K562 (cell line): ENCODE measurements at regions of chr2 and their contacts with region 1.

Region 1: DNA sequence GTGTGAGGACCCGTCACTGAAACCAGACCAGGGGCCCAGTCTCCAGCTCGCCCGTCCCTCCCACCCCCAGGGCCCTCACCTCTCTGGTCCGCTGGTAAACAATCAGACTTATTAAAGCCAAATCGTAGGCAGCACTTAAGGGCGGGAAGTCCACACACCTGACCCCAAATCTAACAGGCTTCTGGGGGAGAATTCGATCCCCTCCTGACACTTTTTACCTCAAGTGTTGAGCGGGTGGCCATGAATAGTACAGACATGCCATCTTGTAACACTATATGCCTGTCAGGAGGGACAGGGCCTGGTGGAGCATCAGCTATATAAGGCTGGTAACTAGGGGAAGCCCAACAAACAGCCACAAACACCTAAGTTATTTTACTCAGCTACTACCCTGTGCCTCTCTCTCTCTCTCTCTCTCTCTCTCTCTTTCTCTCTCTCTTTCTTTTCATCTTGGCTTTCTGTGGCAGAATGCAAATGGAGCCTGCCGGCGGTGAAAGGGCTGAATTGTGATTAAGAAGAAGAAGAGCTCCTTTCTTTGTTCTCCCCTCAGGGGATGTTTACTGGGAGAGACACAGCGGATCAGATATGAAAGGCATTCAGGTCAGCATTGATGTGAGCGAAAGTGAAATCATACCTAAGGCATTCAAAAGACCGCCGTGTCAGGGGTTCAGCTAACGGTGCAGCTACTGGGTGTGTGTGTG is 9.5 kb downstream of the ZEB2 start:
- DNase-seq: peak in 1 of 4 experiments; percentile 56
- ATAC-seq: peak; percentile 44
- H3K4me3 ChIP-seq: peak overlapping the region; percentile 8; the same call in 1 of the 2 replicates
- H3K27ac ChIP-seq: peak overlapping the region; percentile 60
- H3K4me1 ChIP-seq: peaks cover 31 to 85% of the 10 kb centered on the region in 2 experiments
- H3K27me3 ChIP-seq: no peaks in the 10 kb centered on the region
- CTCF ChIP-seq: no peak
- EP300 ChIP-seq: no peak
- POLR2A ChIP-seq: peak; percentile 66
- RAD21 ChIP-seq: 0 out of 4 replicates have a peak, but pooled peaks of 1 of the 2 experiments have one; percentile 0

Region 2: GRCh38 chr2:144456680-144457079 is 53.8 kb before region 1 on chr2:
- CTCF ChIA-PET with region 1: no interaction called
- POLR2A ChIA-PET with region 1: no interaction called
- in situ Hi-C with region 1: no loop called
- intact Hi-C with region 1: no loop called
- DNase-seq: peak in 2 of 4 experiments; percentile 46 to 62
- ATAC-seq: peak; percentile 69
- H3K4me3 ChIP-seq: no peak overlapping the region
- H3K27ac ChIP-seq: no peak overlapping the region
- H3K4me1 ChIP-seq: peaks cover 5 to 84% of the 10 kb centered on the region in 2 experiments; a peak in 4 of 5 replicates
- H3K27me3 ChIP-seq: no peaks in the 10 kb centered on the region
- CTCF ChIP-seq: no peak
- EP300 ChIP-seq: no peak
- POLR2A ChIP-seq: no peak
- RAD21 ChIP-seq: no peak

Region 3: GRCh38 chr2:144493027-144493809 is 17.2 kb before region 1 on chr2:
- CTCF ChIA-PET with region 1: no interaction called
- POLR2A ChIA-PET with region 1: interaction called, 27 read pairs
- in situ Hi-C with region 1: no loop called
- intact Hi-C with region 1: no loop called
- DNase-seq: no peak
- ATAC-seq: no peak
- H3K4me3 ChIP-seq: no peak overlapping the region
- H3K27ac ChIP-seq: no peak overlapping the region
- H3K4me1 ChIP-seq: peaks cover 10 to 28% of the 10 kb centered on the region in 2 experiments; a peak in 4 of 5 replicates
- H3K27me3 ChIP-seq: no peaks in the 10 kb centered on the region
- CTCF ChIP-seq: no peak
- EP300 ChIP-seq: no peak
- POLR2A ChIP-seq: no peak
- RAD21 ChIP-seq: no peak

Region 4: DNA sequence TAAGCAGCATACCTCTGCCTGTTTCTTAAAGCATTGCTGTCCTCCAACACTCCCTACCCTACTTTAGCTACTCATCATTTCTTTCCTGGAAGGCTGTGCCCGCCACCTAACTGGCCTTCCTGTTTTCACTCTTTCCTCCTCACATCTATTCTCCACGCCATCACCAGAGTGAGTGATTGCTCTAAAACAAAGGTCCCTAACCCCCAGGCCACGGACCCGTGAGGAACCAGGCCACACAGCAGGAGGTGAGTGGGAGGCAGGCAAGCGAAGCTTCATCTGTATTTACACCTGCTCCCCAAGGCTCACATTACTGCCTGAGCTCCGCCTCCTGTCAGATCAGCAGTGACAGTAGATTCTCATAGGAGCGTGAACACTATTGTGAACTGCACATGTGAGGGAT is 22.8 kb after region 1 on chr2:
- CTCF ChIA-PET with region 1: no interaction called
- POLR2A ChIA-PET with region 1: no interaction called
- in situ Hi-C with region 1: no loop called
- intact Hi-C with region 1: no loop called
- DNase-seq: peak in 1 of 4 experiments; percentile 45
- ATAC-seq: peak; percentile 24; the same call in 2 of the 3 replicates
- H3K4me3 ChIP-seq: no peak overlapping the region
- H3K27ac ChIP-seq: no peak overlapping the region
- H3K4me1 ChIP-seq: peaks cover 0 to 3% of the 10 kb centered on the region in 2 experiments; a peak in 2 of 5 replicates
- H3K27me3 ChIP-seq: no peaks in the 10 kb centered on the region
- CTCF ChIP-seq: no peak
- EP300 ChIP-seq: no peak
- POLR2A ChIP-seq: no peak
- RAD21 ChIP-seq: no peak